CD8-positive, alpha-beta memory T cell (primary cell): ENCODE measurements at regions of chr17 and their contacts with region 1.

Region 1: DNA sequence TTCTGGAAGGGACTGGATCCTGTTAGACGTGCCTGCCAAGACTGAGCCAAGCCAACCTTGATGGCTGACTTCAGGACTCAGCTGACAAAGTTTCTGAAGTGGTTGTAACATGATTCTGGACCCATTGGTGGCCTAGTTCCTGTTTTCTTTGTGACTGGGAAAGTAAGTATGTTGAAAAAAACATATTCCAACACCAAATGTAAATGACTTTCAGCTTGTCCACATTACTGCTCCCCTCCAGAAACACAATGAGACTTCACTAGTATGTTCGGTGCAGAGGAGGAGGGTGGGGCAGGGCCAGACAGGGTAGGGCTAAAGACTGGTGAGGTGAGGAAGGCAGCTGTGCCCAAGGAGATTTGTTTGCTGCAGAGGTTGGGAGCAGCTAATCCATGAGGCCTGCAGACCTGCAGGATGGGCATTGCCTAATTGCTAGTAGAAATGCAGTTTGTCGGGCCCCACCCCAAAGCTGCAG is 26.4 kb downstream of the NMT1 start:
- DNase-seq: no peak
- H3K4me3 ChIP-seq: no peak overlapping the region
- H3K4me3 Mint-ChIP-seq: no peak overlapping the region
- H3K27ac ChIP-seq: no peak overlapping the region
- H3K27ac Mint-ChIP-seq: no peak overlapping the region
- H3K4me1 ChIP-seq: no peaks in the 10 kb centered on the region
- H3K4me1 Mint-ChIP-seq: peaks cover 0 to 2% (median 0%) of the 10 kb centered on the region in 3 donors
- H3K27me3 ChIP-seq: no peaks in the 10 kb centered on the region
- H3K27me3 Mint-ChIP-seq: no peaks in the 10 kb centered on the region

Region 2: DNA sequence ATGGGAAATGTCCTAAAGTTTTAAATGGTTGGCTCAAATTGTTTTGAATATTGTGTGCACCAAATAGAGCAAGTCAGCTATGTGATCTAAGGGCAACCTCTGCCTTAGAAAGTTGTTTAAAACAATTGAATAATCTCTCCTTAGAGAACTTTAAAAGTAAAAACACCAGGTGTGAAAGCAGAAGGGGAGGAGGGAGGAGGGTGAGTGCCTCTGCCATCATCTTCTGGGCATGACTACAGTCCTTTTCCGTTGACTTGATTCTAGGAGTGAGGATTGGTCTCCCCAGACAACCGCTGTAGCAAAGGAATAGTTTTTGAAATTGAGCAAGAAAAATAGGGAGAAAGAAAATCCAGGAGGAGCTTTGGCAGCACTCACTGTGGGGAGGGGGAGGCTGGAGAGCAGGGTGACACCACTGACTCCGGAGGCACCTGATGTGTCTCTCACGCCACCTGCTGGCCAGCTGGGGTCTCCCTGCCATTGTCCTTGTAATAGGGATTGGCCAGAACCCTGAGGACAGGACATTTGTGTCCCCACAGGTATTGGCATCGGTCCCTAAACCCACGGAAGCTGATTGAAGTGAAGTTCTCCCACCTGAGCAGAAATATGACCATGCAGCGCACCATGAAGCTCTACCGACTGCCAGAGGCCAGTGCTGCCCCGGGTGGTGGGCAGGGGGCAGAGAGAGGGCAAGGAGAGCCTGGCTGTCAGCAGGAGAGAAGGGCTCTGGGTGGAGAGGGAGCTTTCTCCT is 11.5 kb after region 1 on chr17:
- CTCF ChIA-PET with region 1: interaction called, 10 read pairs
- POLR2A ChIA-PET with region 1: no interaction called
- DNase-seq: peak; percentile 43 to 79 (median 49)
- H3K4me3 ChIP-seq: no peak overlapping the region
- H3K4me3 Mint-ChIP-seq: no peak overlapping the region
- H3K27ac ChIP-seq: no peak overlapping the region
- H3K27ac Mint-ChIP-seq: peak overlapping the region in 6 of 8 donors; percentile 16 to 72 (median 32)
- H3K4me1 ChIP-seq: no peaks in the 10 kb centered on the region
- H3K4me1 Mint-ChIP-seq: peaks cover 0 to 7% (median 0%) of the 10 kb centered on the region in 3 donors
- H3K27me3 ChIP-seq: no peaks in the 10 kb centered on the region
- H3K27me3 Mint-ChIP-seq: no peaks in the 10 kb centered on the region